Right cardiac atrium (tissue), 5 donors: ENCODE measurements at regions of chr2 and their contacts with region 1.

Region 1: GRCh38 chr2:45935791-45936622 is 284.5 kb downstream of the PRKCE start:
- DNase-seq: peak; percentile 95 to 97 (median 95)
- ATAC-seq: peak; percentile 91 to 96
- H3K4me3 ChIP-seq: no peak overlapping the region
- H3K27ac ChIP-seq: peak overlapping the region; percentile 40
- H3K4me1 ChIP-seq: peaks cover 5% of the 10 kb centered on the region
- H3K27me3 ChIP-seq: no peaks in the 10 kb centered on the region

Region 2: GRCh38 chr2:45643543-45644542 is 292.2 kb before region 1 on chr2:
- intact Hi-C with region 1: loop called (anchors 2 to 5 kb)
- DNase-seq: peak; percentile 69 to 90 (median 90)
- ATAC-seq: peak; percentile 95 to 96
- H3K4me3 ChIP-seq: peak overlapping the region; percentile 50
- H3K27ac ChIP-seq: no peak overlapping the region
- H3K4me1 ChIP-seq: no peaks in the 10 kb centered on the region
- H3K27me3 ChIP-seq: no peaks in the 10 kb centered on the region

Region 3: GRCh38 chr2:45650851-45651414 is 285.1 kb before region 1 on chr2:
- intact Hi-C with region 1: loop called in 2 of 4 experiments (anchors 2 to 5 kb)
- DNase-seq: peak; percentile 93 to 98 (median 96)
- ATAC-seq: peak; percentile 81 to 89
- H3K4me3 ChIP-seq: peak overlapping the region; percentile 89
- H3K27ac ChIP-seq: peak overlapping the region; percentile 97
- H3K4me1 ChIP-seq: peaks cover 8% of the 10 kb centered on the region
- H3K27me3 ChIP-seq: no peaks in the 10 kb centered on the region

Region 4: GRCh38 chr2:45778720-45779171 is 157.3 kb before region 1 on chr2:
- intact Hi-C with region 1: loop called in 2 of 4 experiments (anchors 5 to 10 kb)
- DNase-seq: peak; percentile 57 to 76 (median 64)
- ATAC-seq: peak; percentile 58 to 71
- H3K4me3 ChIP-seq: no peak overlapping the region
- H3K27ac ChIP-seq: no peak overlapping the region
- H3K4me1 ChIP-seq: peaks cover 6% of the 10 kb centered on the region
- H3K27me3 ChIP-seq: no peaks in the 10 kb centered on the region

Region 5: DNA sequence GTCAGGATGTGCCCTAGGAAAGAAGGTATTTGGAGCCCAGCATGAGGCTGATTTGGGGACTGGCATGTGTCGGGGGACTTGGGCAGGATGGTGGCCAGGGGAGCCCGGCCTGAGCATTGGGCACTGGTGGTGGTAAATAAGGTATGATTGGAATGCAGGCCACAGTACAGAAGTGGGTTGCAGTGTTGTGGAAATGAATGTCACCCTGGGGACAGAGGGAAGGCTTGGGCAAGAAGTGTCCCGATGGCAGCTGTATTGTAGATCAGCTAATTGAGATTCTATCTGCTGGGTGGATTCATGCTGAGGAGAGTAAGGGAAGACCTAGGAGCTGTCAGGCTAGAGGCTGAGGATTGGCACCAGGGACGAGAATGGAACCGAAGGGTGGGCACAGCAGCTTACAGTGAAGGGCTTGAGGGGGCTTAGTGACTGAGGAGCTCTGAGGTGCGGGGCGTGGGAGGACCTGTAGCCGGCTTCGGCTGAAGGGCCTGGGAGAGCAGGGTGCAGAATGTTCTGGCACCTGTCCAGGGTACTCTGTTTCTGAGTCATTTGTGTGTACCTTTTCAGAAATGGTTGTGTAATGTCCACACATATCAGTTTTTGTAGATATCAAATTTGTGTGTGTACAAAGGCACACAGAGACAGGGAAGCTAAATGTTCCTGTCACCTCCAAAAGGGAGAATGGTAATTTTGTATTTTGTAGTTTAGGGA is 114.3 kb before region 1 on chr2:
- intact Hi-C with region 1: loop called in 1 of 4 experiments (anchors 10 kb)
- DNase-seq: peak in 2 of 3 donors; percentile 60 to 77
- ATAC-seq: peak; percentile 50
- H3K4me3 ChIP-seq: no peak overlapping the region
- H3K27ac ChIP-seq: peak overlapping the region; percentile 44
- H3K4me1 ChIP-seq: peaks cover 30% of the 10 kb centered on the region
- H3K27me3 ChIP-seq: no peaks in the 10 kb centered on the region

Region 6: GRCh38 chr2:45874344-45874743 is 61.7 kb before region 1 on chr2:
- intact Hi-C with region 1: no loop called
- DNase-seq: peak; percentile 82 to 92 (median 91)
- ATAC-seq: peak; percentile 90 to 91
- H3K4me3 ChIP-seq: no peak overlapping the region
- H3K27ac ChIP-seq: no peak overlapping the region
- H3K4me1 ChIP-seq: peaks cover 21% of the 10 kb centered on the region
- H3K27me3 ChIP-seq: no peaks in the 10 kb centered on the region

Region 7: DNA sequence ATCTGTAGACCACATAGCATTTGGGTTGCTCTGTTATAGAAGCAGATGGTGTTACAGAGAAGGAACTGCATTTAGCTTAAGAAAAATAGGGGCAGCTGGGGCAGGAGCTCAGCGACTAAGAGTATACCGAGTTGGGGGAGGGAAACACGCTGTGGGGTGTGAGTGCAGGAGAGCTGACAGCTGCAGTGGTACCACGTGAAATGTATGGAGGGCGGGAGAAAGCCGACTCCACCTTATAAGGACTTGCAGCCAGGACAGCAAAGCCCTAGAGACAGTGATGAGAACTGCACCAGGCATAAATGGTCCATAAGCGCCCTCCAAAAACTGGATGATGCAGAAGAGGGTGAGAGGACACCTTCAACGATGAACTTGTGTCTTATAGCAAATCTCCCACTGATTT is 47.0 kb before region 1 on chr2:
- intact Hi-C with region 1: loop called in 1 of 4 experiments (anchors 10 kb)
- DNase-seq: peak in 2 of 3 donors; percentile 61 to 65
- ATAC-seq: peak; percentile 32 to 45
- H3K4me3 ChIP-seq: no peak overlapping the region
- H3K27ac ChIP-seq: no peak overlapping the region
- H3K4me1 ChIP-seq: peaks cover 32% of the 10 kb centered on the region
- H3K27me3 ChIP-seq: no peaks in the 10 kb centered on the region